Panc1 (cell line): ENCODE measurements at regions of chr10 and their contacts with region 1.

Region 1: DNA sequence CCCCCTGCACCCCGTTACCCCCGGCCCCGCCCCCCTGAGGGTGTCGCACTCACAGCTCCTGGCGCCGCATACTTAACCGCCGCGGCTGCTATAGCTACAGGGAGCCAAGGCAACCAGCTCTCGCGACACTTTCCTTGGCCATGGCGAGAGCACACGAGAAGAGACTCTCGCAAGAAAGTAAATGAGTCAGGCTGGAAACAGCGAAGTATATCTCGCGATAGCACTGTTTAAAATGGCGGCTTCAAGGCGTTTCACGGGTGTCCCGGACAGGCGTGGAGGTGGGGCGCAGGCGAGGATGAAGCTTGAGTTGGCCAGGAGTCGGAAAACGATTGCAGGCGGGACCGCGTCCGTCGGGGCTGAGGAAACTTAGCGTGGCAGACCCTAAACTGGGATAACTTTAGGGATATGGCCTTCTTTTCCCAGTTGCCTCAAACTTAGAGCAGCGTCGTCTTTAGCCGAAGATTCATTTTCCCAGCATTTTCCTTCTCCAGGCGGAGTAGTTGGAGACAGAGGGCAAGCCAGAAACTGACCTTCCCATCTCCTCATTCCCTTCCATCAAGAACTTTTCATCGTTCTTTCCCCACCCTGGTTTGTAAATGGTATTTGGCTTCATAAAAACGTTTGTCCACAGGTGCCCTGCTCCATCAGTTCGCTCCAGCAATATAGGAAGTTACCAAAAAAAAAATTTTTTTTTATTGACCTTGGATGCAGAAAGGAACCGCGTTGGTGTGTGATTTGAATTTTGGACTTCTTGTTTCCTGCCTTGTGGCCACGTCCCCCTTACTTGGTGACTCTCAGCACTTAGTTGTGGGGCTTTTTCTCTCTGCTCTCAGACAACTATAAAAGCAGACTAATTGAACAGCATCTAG is 15.2 kb downstream of the MYOZ1 start:
- DNase-seq: peak; percentile 97
- ATAC-seq: peak; percentile 99
- H3K4me3 ChIP-seq: peak overlapping the region; percentile 66 to 99
- H3K27ac ChIP-seq: peak overlapping the region; percentile 99
- H3K4me1 ChIP-seq: peaks cover 8% of the 10 kb centered on the region
- H3K27me3 ChIP-seq: no peaks in the 10 kb centered on the region
- CTCF ChIP-seq: no peak

Region 2: DNA sequence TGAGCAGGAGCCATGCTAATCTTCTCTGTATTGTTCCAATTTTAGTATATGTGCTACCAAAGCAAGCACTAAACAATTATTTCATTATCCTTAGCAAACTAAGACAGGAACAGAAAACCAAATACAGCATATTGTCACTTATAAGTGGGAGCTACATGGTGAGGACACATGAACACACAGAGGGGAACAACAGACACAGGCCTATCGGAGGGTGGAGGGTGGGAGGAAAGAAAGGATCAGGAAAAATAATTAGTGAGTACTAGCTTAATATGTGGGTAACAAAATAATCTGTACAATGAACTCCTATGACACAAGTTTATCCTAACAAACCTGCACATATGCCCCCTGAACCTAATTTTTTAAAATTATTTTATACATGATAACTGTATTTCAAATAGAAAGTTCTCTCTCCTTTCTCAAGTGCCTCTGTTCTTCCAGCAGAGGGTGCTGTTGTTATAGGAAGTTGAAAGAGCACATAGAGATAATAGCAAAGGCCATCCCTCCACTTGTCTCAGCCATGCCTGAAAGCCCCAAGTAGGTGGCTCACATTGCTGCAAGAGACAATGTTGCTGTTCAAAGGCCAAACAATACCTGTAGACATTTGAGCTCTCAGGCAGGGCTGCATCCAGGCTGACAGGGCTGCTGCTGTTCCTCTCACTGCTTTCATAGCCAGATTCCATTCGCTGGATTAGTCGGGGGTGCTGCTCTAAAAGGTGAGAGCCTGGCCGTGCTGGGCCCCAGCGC is 96.9 kb before region 1 on chr10:
- CTCF ChIA-PET with region 1: interaction called, 3 read pairs
- POLR2A ChIA-PET with region 1: interaction called, 10 read pairs
- in situ Hi-C with region 1: no loop called
- intact Hi-C with region 1: loop called (anchors 5 kb)
- DNase-seq: peak; percentile 48
- ATAC-seq: peak; percentile 98
- H3K4me3 ChIP-seq: no peak overlapping the region
- H3K27ac ChIP-seq: no peak overlapping the region
- H3K4me1 ChIP-seq: no peaks in the 10 kb centered on the region
- H3K27me3 ChIP-seq: no peaks in the 10 kb centered on the region
- CTCF ChIP-seq: peak; percentile 87

Region 3: GRCh38 chr10:73559590-73559989 is 66.5 kb before region 1 on chr10:
- CTCF ChIA-PET with region 1: no interaction called
- POLR2A ChIA-PET with region 1: interaction called, 12 read pairs
- in situ Hi-C with region 1: no loop called
- intact Hi-C with region 1: no loop called
- DNase-seq: no peak
- ATAC-seq: no peak
- H3K4me3 ChIP-seq: no peak overlapping the region
- H3K27ac ChIP-seq: no peak overlapping the region
- H3K4me1 ChIP-seq: no peaks in the 10 kb centered on the region
- H3K27me3 ChIP-seq: no peaks in the 10 kb centered on the region
- CTCF ChIP-seq: no peak

Region 4: DNA sequence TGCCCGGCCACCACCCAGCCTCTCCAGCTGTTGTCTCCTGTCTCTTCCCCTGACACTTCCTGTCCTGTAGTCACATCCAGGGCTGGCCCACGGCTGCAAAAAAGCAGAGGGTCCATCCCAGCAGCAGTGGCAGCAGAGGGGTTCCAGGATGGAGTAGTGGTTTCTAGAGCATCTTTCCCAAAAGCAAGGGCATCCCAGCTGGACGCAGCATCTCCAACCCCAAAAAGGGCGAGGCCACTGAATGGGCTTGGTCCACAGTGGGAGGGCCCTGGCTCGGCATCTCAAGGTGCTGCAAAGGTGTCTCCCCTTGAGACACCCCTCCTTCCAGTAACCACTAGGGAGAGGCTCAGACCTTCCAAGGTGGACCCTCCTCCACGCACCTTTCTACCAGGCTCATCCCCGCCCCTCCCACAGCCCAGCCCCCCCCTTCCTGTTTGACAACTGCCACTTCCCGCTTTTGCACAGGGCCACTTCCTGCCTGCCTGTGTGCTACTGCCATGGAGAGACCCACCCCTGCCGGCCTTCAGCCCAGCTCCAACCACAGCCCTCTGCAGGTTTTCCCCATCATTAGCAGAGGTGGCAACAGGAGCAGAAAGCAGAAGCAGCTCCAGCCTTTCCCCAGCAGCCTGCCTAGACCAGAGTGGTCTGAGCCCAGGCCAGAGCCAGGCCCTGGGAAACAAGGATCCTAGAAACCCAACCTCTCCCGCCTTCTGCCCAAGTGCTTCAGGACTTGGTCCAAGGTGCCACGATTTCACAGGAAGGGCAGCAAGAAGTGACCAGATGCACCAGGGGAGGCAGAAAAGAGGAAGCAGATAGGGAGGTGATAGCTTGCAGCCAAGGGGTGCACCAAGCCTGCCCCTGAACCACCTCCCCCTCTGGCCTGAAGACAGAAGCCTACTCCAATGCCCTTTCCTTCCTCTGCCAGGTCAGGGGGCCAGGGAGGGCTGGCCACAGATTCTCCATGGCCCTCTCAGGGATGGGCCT is 239.6 kb after region 1 on chr10:
- CTCF ChIA-PET with region 1: no interaction called
- POLR2A ChIA-PET with region 1: no interaction called
- in situ Hi-C with region 1: no loop called
- intact Hi-C with region 1: no loop called
- DNase-seq: no peak
- ATAC-seq: no peak
- H3K4me3 ChIP-seq: no peak overlapping the region
- H3K27ac ChIP-seq: no peak overlapping the region
- H3K4me1 ChIP-seq: no peaks in the 10 kb centered on the region
- H3K27me3 ChIP-seq: no peaks in the 10 kb centered on the region
- CTCF ChIP-seq: no peak